AG04449 (cell line): ENCODE measurements at regions of chr11 and their contacts with region 1.

Region 1: GRCh38 chr11:120235024-120235861 is 4.7 kb upstream of the POU2F3 start:
- DNase-seq: no peak
- H3K4me3 ChIP-seq: no peak overlapping the region
- CTCF ChIP-seq: peak; percentile 90

Region 2: DNA sequence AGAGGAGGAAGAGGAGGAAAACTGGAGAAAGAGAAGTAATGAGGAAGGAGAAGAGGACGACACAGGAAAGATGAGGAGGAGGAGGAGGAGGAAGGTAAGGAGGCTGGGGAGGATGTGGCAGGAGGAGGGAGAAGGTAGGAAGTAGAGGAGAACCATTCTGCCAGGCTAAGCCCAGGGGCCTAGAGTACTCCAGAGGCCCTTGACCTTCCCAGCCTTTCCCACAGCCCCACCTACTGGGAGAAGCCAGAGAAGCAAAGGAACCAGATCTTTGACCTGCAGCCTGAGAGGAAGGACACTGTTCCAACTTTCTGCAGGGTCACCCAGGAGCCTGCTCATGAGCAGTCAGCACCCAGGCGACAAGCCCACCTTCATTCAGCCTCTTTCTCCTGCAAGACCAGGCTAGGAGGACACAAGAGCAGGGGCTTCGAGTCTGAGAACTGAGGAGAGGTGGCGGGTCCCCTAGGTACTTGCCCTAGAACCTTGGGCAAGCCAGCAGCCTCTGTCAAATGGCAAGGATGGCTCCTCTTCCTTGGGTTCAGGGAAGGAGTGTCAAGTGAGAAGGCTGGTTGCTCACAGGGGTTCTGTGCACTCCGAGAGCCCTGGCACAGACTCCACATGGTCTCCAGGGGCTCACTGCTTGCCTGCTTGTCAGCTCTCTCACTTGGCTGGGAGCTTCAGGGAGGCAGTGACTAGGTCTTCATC is 52.3 kb before region 1 on chr11:
- CTCF ChIA-PET with region 1: interaction called, 159 read pairs
- POLR2A ChIA-PET with region 1: no interaction called
- DNase-seq: no peak
- H3K4me3 ChIP-seq: no peak overlapping the region
- CTCF ChIP-seq: peak; percentile 28

Region 3: DNA sequence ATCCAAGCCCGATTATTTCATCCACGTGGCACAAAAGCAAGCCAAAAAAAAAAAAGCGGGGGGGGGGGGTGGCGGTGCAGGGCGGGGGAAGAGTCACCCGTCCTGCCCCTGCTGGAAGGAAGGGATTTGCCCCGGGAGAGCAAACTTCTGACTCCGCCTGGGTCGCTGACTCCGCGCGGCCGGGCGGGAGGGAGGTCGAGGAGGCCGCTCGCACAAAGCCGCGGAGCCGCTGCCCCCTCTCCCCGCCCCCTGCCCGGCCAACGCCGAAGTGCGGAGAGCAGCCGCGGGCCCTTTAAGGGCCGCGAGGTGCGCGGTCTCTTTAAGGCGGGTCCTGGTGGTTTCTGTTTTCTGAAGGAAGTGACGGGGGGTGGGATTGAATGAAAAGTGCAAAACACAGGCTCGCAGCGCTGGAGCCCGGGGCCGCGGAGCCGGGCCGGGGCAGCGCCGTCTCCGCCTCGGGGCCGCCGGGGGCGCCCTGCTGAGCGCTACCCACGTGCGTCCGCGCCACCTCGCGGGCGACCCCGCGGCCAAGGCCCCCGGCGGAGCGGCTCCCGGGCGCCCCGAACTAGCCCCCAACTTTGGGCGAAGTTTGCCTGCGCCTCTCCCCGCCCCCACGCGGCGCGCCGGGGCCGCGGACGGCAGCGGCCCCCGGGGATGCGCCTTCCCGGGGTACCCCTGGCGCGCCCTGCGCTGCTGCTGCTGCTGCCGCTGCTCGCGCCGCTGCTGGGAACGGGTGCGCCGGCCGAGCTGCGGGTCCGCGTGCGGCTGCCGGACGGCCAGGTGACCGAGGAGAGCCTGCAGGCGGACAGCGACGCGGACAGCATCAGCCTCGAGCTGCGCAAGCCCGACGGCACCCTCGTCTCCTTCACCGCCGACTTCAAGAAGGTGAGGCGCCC is 24.4 kb before region 1 on chr11 and contains the start of gene OAF:
- CTCF ChIA-PET with region 1: interaction called, 71 read pairs
- POLR2A ChIA-PET with region 1: no interaction called
- DNase-seq: no peak
- H3K4me3 ChIP-seq: peak within 1 kb of the TSS; percentile 74
- CTCF ChIP-seq: peak; percentile 21

Region 4: DNA sequence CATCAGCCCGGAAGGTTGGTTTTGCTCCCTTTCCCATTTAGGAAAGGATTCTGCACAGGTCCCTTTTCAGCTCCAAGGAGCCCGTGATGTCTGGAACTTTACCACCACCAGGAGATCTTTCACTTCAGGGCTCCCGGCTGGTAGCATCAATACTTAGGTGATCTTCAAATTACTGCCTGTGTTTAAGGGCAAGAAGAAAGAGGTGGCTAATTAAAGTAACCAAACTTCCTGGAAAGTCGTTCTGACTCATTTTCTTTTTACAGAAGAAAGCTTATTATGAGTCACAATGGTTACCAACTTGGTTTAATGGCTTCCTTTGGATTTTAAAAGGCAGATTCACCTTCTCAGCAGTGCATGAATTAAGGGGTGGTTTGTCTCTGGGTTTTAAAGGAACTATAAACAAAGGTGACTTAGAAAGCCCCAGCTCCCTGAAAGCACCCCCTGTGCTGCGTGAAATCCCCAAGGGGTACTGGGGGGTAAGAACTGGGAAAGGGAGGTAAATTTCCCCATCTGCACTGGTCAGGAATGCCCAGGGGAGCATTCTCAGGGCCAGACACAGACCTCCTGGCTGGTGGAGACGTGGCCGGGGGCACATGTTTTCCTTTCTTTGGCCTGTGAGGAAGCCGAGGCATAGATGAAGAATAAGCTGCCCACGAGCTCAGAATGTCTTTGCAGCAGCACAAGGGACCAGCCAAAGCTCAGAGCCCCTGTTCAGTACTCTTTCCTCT is 13.5 kb after region 1 on chr11:
- CTCF ChIA-PET with region 1: interaction called, 101 read pairs
- POLR2A ChIA-PET with region 1: no interaction called
- DNase-seq: no peak
- H3K4me3 ChIP-seq: no peak overlapping the region
- CTCF ChIP-seq: no peak